Activated B cell treated with CpG ODN at 0.5 μM for 24 hours (primary cell): ENCODE measurements at regions of chr1 and their contacts with region 1.

Region 1: GRCh38 chr1:244970661-244971551 is 106.6 kb upstream of the HNRNPU start:
- DNase-seq: peak; percentile 91
- ATAC-seq: peak; percentile 75
- H3K4me3 Mint-ChIP-seq: peak overlapping the region; percentile 95
- H3K27ac Mint-ChIP-seq: peak overlapping the region; percentile 99
- H3K4me1 Mint-ChIP-seq: peaks cover 17% of the 10 kb centered on the region
- H3K27me3 Mint-ChIP-seq: no peaks in the 10 kb centered on the region
- CTCF ChIP-seq: no peak

Region 2: DNA sequence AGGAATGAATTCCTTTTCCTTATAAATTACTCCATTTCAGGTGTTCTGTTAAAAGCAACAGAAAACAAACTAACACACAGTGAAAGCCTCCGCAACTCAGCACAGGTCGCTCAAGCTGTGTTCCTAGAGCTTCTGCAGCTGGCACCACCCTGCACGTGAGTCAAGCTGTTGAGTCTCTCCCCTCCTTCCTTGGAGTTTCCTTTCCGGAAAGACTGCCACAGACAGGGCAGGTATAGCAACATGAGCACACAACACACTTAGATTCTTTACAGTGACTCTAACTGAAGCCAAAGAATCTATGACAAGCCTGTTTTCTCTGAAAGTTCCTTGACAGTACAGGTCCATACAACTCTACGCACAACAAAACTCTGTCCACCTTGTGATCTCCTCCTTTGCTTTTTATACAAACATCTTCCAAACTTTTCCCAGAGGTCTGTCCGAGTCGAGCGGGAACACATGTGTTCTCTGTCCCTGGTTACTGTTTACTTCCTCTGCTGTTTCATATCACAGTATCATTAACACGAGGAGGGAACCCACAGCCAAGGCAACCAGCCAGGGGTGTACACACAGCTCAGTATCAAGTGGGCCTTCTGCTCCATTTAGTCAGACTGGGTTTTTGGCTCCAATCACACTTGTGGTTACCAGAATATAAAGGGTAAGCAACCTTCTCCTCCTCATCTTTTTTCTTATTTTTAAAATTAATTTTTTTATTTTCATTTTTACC is 356.6 kb before region 1 on chr1:
- CTCF ChIA-PET with region 1: no interaction called
- POLR2A ChIA-PET with region 1: no interaction called
- intact Hi-C with region 1: no loop called
- DNase-seq: no peak
- ATAC-seq: no peak
- H3K4me3 Mint-ChIP-seq: no peak overlapping the region
- H3K27ac Mint-ChIP-seq: no peak overlapping the region
- H3K4me1 Mint-ChIP-seq: no peaks in the 10 kb centered on the region
- H3K27me3 Mint-ChIP-seq: peaks cover 2% of the 10 kb centered on the region
- CTCF ChIP-seq: no peak

Region 3: DNA sequence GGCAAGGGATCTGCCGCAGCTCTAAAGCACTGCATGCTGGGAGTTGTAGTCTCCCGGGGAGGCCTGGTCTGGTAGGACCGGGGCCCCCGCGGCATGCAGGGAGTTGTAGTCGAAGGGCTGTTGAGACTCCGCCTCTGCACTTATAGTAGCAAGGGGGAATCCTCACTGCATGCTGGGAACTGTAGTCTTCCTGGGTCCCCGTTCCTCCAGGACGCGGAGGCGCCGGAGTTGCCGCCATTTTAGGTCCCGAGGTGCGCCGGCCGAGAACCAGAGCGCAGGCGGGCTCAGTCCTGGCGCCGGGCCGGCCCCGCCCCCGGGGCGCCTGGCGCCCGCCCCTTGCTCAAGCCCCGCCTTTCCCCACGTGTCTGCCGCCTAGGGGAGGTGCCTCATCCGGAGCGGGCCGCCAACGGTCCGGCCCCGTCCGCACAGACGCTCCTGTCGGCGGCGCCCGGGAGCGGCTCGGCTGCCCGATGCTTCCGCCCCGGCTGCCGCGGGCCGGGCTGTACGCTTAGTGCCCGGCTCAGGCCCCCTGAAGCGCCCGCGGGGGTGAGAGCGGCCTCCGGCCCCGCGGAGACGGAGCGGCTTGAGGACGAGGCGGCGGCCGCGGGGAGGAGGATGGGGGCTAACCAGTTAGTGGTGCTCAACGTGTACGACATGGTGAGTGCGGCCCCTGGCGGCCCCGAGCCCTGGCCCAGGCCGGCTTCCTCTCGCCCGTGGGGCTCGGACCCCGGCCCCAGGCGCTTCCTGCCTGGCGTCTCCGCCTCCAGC is 318.0 kb before region 1 on chr1 and contains the start of gene DESI2:
- CTCF ChIA-PET with region 1: no interaction called
- POLR2A ChIA-PET with region 1: interaction called, 8 read pairs
- intact Hi-C with region 1: loop called (anchors 1 kb)
- DNase-seq: peak; percentile 98
- ATAC-seq: peak; percentile 91
- H3K4me3 Mint-ChIP-seq: peak within 1 kb of the TSS; percentile 86
- H3K27ac Mint-ChIP-seq: peak within 1 kb of the TSS; percentile 88
- H3K4me1 Mint-ChIP-seq: peaks cover 18% of the 10 kb centered on the region
- H3K27me3 Mint-ChIP-seq: no peaks in the 10 kb centered on the region
- CTCF ChIP-seq: no peak
- total RNA-seq, gene DESI2: 24.2 and 25.8 TPM in 2 replicates

Region 4: GRCh38 chr1:244801246-244801645 is 169.7 kb before region 1 on chr1:
- CTCF ChIA-PET with region 1: interaction called, 4 read pairs
- POLR2A ChIA-PET with region 1: interaction called, 8 read pairs
- intact Hi-C with region 1: loop called (anchors 1 kb)
- DNase-seq: peak; percentile 36
- ATAC-seq: peak; percentile 96
- H3K4me3 Mint-ChIP-seq: peak overlapping the region; percentile 55
- H3K27ac Mint-ChIP-seq: peak overlapping the region; percentile 59
- H3K4me1 Mint-ChIP-seq: peaks cover 5% of the 10 kb centered on the region
- H3K27me3 Mint-ChIP-seq: peaks cover 8% of the 10 kb centered on the region
- CTCF ChIP-seq: no peak

Region 5: DNA sequence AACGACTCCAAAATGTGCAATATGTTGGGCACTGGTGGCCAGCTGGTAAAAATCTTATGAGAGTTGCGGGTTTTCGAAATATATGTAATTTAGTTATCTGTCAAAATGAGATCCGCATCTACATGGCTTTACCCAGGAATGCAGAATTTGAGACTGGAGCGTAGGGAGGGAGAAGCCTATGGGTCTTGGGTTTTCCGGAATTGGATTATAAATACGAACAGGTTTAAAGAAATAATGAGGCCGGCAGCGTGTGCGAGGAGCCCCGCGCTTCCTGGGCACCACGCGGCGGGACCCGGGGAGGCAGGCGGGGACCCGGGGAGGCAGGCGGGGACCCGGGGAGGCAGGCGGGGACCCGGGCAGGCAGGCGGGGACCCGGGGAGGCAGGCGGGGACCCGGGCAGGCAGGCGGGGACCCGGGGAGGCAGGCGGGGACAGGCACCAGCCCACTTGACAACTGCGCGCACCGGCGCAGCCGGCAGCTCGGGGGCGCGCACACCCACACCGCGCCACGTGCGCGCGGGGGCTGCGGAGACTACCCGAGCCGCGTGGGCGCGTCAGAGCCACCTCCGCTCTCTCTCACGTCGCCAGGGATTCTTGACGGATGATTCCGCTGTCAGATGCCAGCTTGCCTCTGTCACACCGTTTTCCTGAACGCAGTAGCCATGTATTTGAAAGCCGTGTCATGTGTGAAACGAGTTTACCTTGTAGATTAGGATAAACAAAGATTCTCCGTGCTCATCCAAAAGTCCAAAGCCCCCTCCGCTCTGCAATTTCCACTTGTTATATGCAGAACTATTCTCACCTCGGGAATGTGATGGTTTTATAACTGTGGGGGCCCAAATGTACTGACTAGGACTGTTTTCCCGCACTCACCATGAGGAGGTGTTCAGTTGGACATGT is 52.2 kb before region 1 on chr1:
- CTCF ChIA-PET with region 1: interaction called, 3 read pairs
- POLR2A ChIA-PET with region 1: interaction called, 11 read pairs
- intact Hi-C with region 1: loop called (anchors 1 kb)
- DNase-seq: peak; percentile 61
- ATAC-seq: peak; percentile 83
- H3K4me3 Mint-ChIP-seq: peak overlapping the region; percentile 89
- H3K27ac Mint-ChIP-seq: peak overlapping the region; percentile 66
- H3K4me1 Mint-ChIP-seq: peaks cover 26% of the 10 kb centered on the region
- H3K27me3 Mint-ChIP-seq: no peaks in the 10 kb centered on the region
- CTCF ChIP-seq: no peak

Region 6: GRCh38 chr1:244989813-244990212 is 18.9 kb after region 1 on chr1:
- CTCF ChIA-PET with region 1: no interaction called
- POLR2A ChIA-PET with region 1: interaction called, 19 read pairs
- intact Hi-C with region 1: no loop called
- DNase-seq: no peak
- ATAC-seq: no peak
- H3K4me3 Mint-ChIP-seq: no peak overlapping the region
- H3K27ac Mint-ChIP-seq: no peak overlapping the region
- H3K4me1 Mint-ChIP-seq: peaks cover 11% of the 10 kb centered on the region
- H3K27me3 Mint-ChIP-seq: no peaks in the 10 kb centered on the region
- CTCF ChIP-seq: no peak

Region 7: DNA sequence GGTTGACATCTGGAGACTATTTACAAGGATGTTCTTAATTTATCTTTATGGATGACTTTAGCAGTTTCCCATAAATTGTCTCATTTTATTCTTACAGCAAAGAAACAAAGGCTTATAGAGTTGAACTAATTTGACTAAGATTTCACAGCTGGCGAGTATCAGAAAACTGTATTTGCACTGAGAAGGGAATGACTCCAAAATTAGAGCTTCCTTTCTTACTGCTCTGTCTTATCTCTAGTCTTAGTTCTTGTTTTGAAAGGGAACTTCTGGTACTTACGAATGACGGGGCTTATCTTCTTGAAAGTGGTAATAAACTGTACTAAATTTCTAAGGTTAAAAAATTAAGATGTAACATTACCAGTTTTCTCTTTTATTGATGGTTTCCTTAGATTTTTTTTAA is 1608.9 kb after region 1 on chr1:
- CTCF ChIA-PET with region 1: no interaction called
- POLR2A ChIA-PET with region 1: no interaction called
- intact Hi-C with region 1: loop called (anchors 10 kb)
- DNase-seq: no peak
- ATAC-seq: peak; percentile 75
- H3K4me3 Mint-ChIP-seq: peak overlapping the region; percentile 55
- H3K27ac Mint-ChIP-seq: peak overlapping the region; percentile 66
- H3K4me1 Mint-ChIP-seq: peaks cover 60% of the 10 kb centered on the region
- H3K27me3 Mint-ChIP-seq: no peaks in the 10 kb centered on the region
- CTCF ChIP-seq: no peak